Heart left ventricle (tissue), 16 donors: ENCODE measurements at regions of chr10 and their contacts with region 1.

Region 1: DNA sequence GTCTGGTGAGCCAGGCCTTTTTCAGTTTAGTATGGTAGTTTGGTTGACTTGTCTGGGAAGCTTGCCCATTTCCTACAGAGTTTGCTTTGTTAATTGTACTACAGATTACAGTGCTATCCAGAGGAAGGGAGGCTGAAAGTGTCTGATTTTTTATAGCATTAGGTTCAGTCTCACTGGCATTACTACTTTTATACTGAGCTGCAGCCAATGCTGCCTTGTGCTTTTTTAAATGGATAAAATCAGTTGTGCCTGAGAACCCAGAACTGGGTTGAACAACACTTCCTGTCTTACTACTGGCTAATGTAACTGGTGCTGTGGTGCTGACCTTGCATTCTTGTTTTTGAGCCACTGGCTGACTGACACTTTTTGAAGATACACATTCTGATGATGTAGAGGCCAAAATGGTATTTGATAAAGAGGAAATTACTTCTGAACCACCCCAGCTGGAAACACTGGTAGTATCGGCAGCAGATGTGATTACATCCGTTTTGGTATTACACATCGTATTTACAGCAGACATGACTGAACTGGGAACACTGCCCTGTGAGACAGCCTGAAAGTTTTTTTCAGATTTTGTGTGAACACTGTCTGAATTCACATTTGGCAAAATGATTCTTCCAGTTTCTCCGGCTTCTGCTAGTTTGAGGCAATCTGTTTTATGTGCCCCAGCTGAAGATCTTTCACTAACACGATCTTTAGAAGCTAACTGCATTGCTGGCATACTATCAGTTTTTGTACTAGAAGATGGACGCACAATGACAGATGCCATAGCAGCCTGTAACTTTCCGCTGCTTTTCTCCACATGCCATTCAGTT is 74.1 kb downstream of the NRBF2 start:
- DNase-seq: peak in 4 of 5 donors; percentile 40 to 50 (median 44)
- ATAC-seq: peak; percentile 65 to 84 (median 80)
- H3K4me3 ChIP-seq: peak overlapping the region in 6 of 12 donors; percentile 5 to 20 (median 14)
- H3K27ac ChIP-seq: peak overlapping the region; percentile 29 to 85 (median 67)
- H3K4me1 ChIP-seq: peaks cover 3 to 78% (median 60%) of the 10 kb centered on the region in 12 donors
- H3K27me3 ChIP-seq: no peaks in the 10 kb centered on the region
- CTCF ChIP-seq: no peak
- POLR2A ChIP-seq: no peak

Region 2: DNA sequence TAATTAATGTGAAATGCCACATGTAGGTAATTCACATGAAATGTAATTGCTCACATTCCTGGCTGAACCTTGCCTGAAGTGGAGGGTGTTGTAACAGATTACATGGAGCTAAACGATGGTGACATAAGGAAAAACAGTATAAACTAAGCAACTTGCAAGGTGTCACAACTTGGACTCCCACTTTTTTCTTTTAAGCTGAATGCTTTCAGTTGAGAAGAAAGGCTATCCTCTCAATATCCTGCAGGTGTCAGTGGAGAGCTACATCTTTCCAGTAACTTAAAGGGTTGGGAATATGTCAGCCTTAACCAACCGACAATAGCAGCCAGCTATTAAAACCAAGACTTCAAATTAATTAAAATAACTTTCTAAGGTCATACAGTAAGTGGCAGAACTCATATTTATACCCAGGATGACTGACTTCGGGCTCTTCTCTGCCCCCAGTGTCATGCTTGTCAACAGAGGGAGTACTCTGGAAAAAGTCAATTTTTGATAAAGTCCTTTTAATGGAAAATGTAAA is 40.4 kb before region 1 on chr10:
- intact Hi-C with region 1: loop called in 3 of 10 experiments (anchors 2 to 5 kb)
- DNase-seq: peak in 1 of 5 donors; percentile 32
- ATAC-seq: peak; percentile 47 to 72 (median 68)
- H3K4me3 ChIP-seq: no peak overlapping the region
- H3K27ac ChIP-seq: peak overlapping the region in 1 of 12 donors; percentile 0
- H3K4me1 ChIP-seq: peaks cover 0 to 37% (median 17%) of the 10 kb centered on the region in 12 donors
- H3K27me3 ChIP-seq: no peaks in the 10 kb centered on the region
- CTCF ChIP-seq: peak; percentile 64 to 92 (median 82)
- POLR2A ChIP-seq: no peak

Region 3: DNA sequence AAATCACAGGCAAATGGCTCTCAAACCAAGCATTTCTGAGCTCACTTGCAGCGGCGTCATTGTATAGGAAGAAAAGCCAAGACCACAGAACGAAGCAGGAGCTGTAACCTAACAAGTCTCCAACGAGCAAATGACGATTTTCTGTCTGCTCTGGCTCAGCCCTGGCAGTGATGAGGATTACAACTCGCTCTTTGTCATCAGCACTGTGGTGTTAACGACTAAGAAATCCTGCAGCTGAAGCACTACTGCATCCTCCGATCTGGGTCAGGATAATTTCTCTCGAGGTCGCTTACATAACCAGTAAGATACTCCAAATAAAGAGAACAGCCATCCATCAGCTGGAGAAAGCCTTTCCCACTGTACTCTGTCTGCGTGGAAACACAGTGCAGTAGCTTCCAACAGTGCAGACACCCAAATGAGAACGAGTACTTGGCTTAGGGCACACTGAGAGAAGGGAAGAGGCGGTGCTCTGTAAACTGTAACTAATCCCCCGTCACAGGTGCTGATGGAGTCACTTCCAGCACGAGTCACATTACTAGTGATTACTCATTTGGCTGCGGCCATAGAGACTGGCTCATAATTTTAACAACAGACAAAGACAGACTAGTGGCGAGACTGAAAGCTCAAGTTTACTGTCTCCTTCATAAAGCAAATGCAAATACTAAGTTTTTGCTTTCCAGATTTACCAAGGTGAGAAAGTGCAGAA is 61.7 kb after region 1 on chr10:
- intact Hi-C with region 1: loop called in 4 of 10 experiments (anchors 5 to 10 kb)
- DNase-seq: peak in 4 of 5 donors; percentile 87 to 88 (median 88)
- ATAC-seq: peak; percentile 96 to 99 (median 98)
- H3K4me3 ChIP-seq: peak overlapping the region; percentile 30 to 68 (median 58)
- H3K27ac ChIP-seq: peak overlapping the region; percentile 84 to 96 (median 88)
- H3K4me1 ChIP-seq: peaks cover 4 to 38% (median 19%) of the 10 kb centered on the region in 12 donors
- H3K27me3 ChIP-seq: no peaks in the 10 kb centered on the region
- CTCF ChIP-seq: peak in 10 of 12 donors; percentile 13 to 49 (median 38)
- POLR2A ChIP-seq: peak in 1 of 2 donors; percentile 94

Region 4: GRCh38 chr10:63515002-63515763 is 308.0 kb after region 1 on chr10:
- intact Hi-C with region 1: loop called in 3 of 10 experiments (anchors 5 kb)
- DNase-seq: no peak
- ATAC-seq: peak; percentile 14 to 85 (median 60)
- H3K4me3 ChIP-seq: peak overlapping the region in 3 of 12 donors; percentile 6 to 14 (median 13)
- H3K27ac ChIP-seq: peak overlapping the region in 11 of 12 donors; percentile 48 to 82 (median 67)
- H3K4me1 ChIP-seq: peaks cover 5 to 58% (median 44%) of the 10 kb centered on the region in 12 donors
- H3K27me3 ChIP-seq: no peaks in the 10 kb centered on the region
- CTCF ChIP-seq: no peak
- POLR2A ChIP-seq: no peak

Region 5: GRCh38 chr10:63711867-63712716 is 504.9 kb after region 1 on chr10:
- intact Hi-C with region 1: loop called in 2 of 10 experiments (anchors 5 kb)
- DNase-seq: peak; percentile 93 to 98 (median 94)
- ATAC-seq: peak; percentile 93 to 95 (median 94)
- H3K4me3 ChIP-seq: no peak overlapping the region
- H3K27ac ChIP-seq: peak overlapping the region; percentile 79 to 86 (median 83)
- H3K4me1 ChIP-seq: peaks cover 15 to 66% (median 43%) of the 10 kb centered on the region in 12 donors
- H3K27me3 ChIP-seq: no peaks in the 10 kb centered on the region
- CTCF ChIP-seq: no peak
- POLR2A ChIP-seq: no peak